PC-3 (cell line): ENCODE measurements at regions of chr3 and their contacts with region 1.

Region 1: GRCh38 chr3:107117922-107118536 is 259.2 kb upstream of the CCDC54 start:
- DNase-seq: peak; percentile 78
- ATAC-seq: peak; percentile 74
- H3K4me3 ChIP-seq: no peak overlapping the region
- H3K27ac ChIP-seq: no peak overlapping the region
- H3K4me1 ChIP-seq: peaks cover 9% of the 10 kb centered on the region; the same call in 1 of the 2 replicates
- H3K27me3 ChIP-seq: no peaks in the 10 kb centered on the region
- CTCF ChIP-seq: peak; percentile 90

Region 2: GRCh38 chr3:105527949-105528348 is 1590.1 kb before region 1 on chr3:
- CTCF ChIA-PET with region 1: no interaction called
- POLR2A ChIA-PET with region 1: no interaction called
- intact Hi-C with region 1: loop called (anchors 5 kb)
- DNase-seq: peak; percentile 85
- ATAC-seq: peak; percentile 66
- H3K4me3 ChIP-seq: no peak overlapping the region
- H3K27ac ChIP-seq: peak overlapping the region; percentile 72
- H3K4me1 ChIP-seq: peaks cover 62% of the 10 kb centered on the region
- H3K27me3 ChIP-seq: no peaks in the 10 kb centered on the region
- CTCF ChIP-seq: no peak

Region 3: DNA sequence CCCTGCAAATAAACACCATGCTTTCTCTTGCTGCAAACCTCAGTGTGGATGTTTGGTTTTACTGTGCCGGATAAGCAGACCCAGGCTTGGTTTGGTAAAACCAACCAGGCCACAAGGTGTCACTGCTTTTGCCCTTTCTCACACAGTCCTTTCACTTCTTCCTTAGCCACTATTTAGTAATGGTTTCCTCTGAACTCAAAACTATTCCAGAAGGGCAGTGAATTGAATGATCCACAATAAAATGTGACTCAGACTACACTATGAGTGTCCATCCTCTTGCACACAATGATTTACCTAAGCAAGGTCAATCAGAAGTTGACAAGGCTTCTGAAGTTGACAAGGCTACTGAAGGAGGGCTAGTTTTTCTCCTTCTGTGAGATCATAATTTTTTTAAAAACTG is 293.2 kb before region 1 on chr3:
- CTCF ChIA-PET with region 1: no interaction called
- POLR2A ChIA-PET with region 1: no interaction called
- intact Hi-C with region 1: loop called (anchors 1 kb)
- DNase-seq: peak; percentile 77
- ATAC-seq: peak; percentile 97
- H3K4me3 ChIP-seq: no peak overlapping the region
- H3K27ac ChIP-seq: no peak overlapping the region
- H3K4me1 ChIP-seq: peaks cover 10% of the 10 kb centered on the region; the same call in 1 of the 2 replicates
- H3K27me3 ChIP-seq: no peaks in the 10 kb centered on the region
- CTCF ChIP-seq: peak; percentile 71

Region 4: GRCh38 chr3:107064445-107065060 is 53.5 kb before region 1 on chr3:
- CTCF ChIA-PET with region 1: interaction called, 3 read pairs
- POLR2A ChIA-PET with region 1: no interaction called
- intact Hi-C with region 1: loop called (anchors 2 kb)
- DNase-seq: peak; percentile 91
- ATAC-seq: peak; percentile 84
- H3K4me3 ChIP-seq: no peak overlapping the region
- H3K27ac ChIP-seq: no peak overlapping the region
- H3K4me1 ChIP-seq: peaks cover 16% of the 10 kb centered on the region
- H3K27me3 ChIP-seq: no peaks in the 10 kb centered on the region
- CTCF ChIP-seq: peak; percentile 95